AG04449 (cell line): ENCODE measurements at regions of chrX and their contacts with region 1.

Region 1: GRCh38 chrX:20066968-20067708 is 49.6 kb downstream of the MAP7D2 start:
- DNase-seq: no peak
- H3K4me3 ChIP-seq: no peak overlapping the region; the same call in 1 of the 2 replicates
- CTCF ChIP-seq: peak; percentile 28

Region 2: DNA sequence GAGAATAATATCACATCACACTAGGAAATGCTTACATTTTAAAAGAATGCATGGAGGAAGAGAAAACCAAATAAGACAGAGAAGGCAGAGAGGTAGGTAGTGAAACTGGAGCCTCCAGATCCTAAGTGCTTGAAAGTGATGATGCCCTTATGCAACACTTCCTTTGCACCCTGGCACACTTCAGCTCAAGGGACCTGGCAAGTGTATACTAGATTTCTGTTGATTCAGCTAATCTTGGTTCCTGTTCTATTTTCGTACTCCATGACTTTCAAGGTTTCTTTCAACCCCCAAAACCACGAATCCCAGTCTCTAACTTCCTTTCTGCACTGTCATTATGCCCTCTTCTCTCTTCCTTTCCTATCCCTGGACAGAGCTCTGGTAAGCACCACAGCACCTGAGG is 142.9 kb before region 1 on chrX:
- CTCF ChIA-PET with region 1: no interaction called
- POLR2A ChIA-PET with region 1: no interaction called
- DNase-seq: no peak
- H3K4me3 ChIP-seq: no peak overlapping the region
- CTCF ChIP-seq: no peak

Region 3: GRCh38 chrX:20080277-20080676 is 13.1 kb after region 1 on chrX:
- CTCF ChIA-PET with region 1: interaction called, 10 read pairs
- POLR2A ChIA-PET with region 1: no interaction called
- DNase-seq: no peak
- H3K4me3 ChIP-seq: no peak overlapping the region
- CTCF ChIP-seq: no peak

Region 4: DNA sequence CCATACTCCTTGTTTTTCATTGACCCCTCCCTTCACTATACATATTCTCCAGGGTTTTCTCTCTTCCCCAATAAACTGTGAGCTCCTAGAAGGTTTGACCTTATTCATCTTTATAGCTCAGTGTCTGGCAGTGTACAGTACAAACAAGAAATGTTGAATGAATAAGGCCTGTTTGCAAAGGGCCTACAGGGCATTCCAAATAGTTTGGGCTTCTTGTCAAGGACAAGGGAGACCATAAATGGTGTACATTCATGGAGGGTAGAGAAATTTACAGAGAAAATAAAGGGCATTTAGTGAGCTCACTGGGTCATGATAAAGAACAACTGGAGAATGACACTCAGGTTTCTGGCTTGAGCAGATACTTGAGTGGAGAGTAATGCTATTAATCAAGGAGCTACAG is 122.0 kb after region 1 on chrX:
- CTCF ChIA-PET with region 1: no interaction called
- POLR2A ChIA-PET with region 1: no interaction called
- DNase-seq: no peak
- H3K4me3 ChIP-seq: no peak overlapping the region
- CTCF ChIP-seq: no peak

Region 5: DNA sequence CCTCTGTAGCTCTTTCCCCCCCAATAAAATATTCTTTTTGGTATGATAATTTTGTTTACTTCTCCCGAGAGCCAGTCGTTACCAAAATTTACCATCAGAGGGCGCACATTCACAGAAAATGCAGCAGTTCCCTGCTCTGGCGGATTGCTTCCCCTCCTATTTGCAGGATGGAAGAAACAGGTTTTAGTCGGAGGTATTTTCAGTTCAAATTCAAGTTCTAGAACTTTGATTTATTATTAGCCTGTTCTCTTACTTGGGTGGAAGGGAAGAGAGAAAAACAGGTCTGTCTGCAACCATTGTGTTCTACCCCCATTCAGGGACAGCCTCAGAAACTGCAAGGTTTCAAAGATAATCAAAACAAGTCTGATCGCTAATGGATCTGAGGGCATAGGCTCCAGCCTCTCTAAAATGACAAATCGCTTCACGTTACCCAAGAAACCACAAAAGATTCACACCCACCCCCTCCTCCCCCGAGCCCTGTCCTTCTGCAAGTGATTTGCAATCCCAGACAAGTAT is 463.3 kb after region 1 on chrX:
- CTCF ChIA-PET with region 1: no interaction called
- POLR2A ChIA-PET with region 1: no interaction called
- DNase-seq: no peak
- H3K4me3 ChIP-seq: peak overlapping the region; percentile 27
- CTCF ChIP-seq: peak; percentile 48